GM12878 (cell line): ENCODE measurements at regions of chr10 and their contacts with region 1.

Region 1: DNA sequence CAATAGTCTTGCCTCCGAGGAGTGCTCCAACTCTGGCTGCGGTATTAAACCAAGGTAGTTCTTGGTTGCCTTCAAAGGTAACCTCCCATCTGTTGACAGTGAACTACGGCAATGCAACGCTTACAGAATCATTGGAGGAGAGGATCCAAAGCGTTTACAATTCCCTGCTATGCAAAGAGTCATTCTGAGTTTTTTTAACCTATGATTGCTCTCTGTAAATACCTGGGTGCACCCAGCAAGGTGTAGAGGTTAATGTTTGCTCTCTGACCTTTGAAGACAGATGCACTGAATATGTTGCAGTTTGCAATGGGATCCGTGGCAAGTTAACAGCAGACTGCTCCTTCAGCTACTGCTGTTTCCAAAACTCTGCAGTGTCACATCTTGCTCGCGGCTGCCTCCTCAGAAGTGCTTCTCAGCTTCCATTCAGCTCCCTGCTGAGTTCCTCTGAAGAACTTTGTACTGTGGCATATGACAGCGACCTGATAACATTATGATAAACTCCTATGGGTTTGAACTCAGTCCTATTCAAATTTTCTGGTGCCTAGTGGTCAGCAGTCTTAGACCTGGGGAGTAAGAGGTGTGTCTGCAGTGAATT is 29.0 kb downstream of the KIAA1217 start:
- DNase-seq: no peak
- ATAC-seq: no peak
- H3K4me3 ChIP-seq: no peak overlapping the region
- H3K27ac ChIP-seq: no peak overlapping the region
- H3K4me1 ChIP-seq: no peaks in the 10 kb centered on the region
- H3K27me3 ChIP-seq: no peaks in the 10 kb centered on the region
- CTCF ChIP-seq: no peak
- EP300 ChIP-seq: no peak
- POLR2A ChIP-seq: no peak
- RAD21 ChIP-seq: no peak

Region 2: GRCh38 chr10:24202181-24202570 is 35.7 kb before region 1 on chr10:
- CTCF ChIA-PET with region 1: no interaction called
- POLR2A ChIA-PET with region 1: no interaction called
- RAD21 ChIA-PET with region 1: no interaction called
- SMC1A ChIA-PET with region 1: no interaction called
- in situ Hi-C with region 1: no loop called
- intact Hi-C with region 1: no loop called
- DNase-seq: no peak
- ATAC-seq: peak; percentile 17; the same call in 2 of the 3 replicates
- H3K4me3 ChIP-seq: no peak overlapping the region
- H3K27ac ChIP-seq: no peak overlapping the region
- H3K4me1 ChIP-seq: peaks cover 6% of the 10 kb centered on the region
- H3K27me3 ChIP-seq: no peaks in the 10 kb centered on the region
- CTCF ChIP-seq: no peak
- EP300 ChIP-seq: no peak
- POLR2A ChIP-seq: no peak
- RAD21 ChIP-seq: no peak

Region 3: DNA sequence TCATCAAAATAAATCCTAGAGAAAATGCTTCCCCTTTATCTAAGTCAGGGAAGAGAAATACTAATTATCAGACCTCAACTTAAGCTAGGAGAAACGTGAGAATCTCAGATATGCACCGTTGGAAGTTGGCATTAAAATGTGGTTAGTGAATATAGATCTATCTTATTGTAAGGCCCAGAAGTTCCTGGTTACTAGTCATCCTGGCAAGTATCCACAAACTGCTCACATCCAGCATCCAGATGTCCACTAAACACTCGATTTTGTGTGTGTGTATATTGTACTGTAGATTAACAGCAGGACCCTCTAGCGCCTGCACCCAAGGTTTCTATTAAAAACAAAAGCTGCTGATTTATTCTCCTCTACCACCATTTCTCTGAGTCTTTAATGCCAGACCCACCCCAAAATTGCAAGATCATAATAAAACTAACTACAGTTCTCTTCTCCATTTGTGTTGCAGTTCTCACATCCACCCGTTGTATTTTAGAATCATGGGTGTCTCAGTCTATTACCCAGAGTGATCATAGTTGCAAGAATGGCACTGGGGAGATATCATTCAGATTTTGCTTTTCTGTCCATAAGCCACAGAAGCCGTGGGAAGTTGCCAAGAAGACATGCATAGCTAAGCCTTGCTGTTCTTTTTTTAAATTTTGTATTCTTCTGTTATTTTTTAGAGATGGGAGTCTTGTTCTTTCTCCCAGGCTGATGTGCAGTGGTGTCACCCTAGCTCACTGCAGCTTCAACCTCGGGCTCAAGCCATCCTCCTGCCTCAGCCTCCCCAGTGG is 136.4 kb after region 1 on chr10:
- CTCF ChIA-PET with region 1: no interaction called
- POLR2A ChIA-PET with region 1: interaction called, 11 read pairs
- RAD21 ChIA-PET with region 1: interaction called, 3 read pairs
- SMC1A ChIA-PET with region 1: no interaction called
- in situ Hi-C with region 1: no loop called
- intact Hi-C with region 1: no loop called
- DNase-seq: no peak
- ATAC-seq: no peak
- H3K4me3 ChIP-seq: no peak overlapping the region
- H3K27ac ChIP-seq: no peak overlapping the region
- H3K4me1 ChIP-seq: no peaks in the 10 kb centered on the region
- H3K27me3 ChIP-seq: no peaks in the 10 kb centered on the region
- CTCF ChIP-seq: no peak
- EP300 ChIP-seq: no peak
- POLR2A ChIP-seq: no peak
- RAD21 ChIP-seq: no peak